PC-3 (cell line): ENCODE measurements at regions of chr7 and their contacts with region 1.

Region 1: DNA sequence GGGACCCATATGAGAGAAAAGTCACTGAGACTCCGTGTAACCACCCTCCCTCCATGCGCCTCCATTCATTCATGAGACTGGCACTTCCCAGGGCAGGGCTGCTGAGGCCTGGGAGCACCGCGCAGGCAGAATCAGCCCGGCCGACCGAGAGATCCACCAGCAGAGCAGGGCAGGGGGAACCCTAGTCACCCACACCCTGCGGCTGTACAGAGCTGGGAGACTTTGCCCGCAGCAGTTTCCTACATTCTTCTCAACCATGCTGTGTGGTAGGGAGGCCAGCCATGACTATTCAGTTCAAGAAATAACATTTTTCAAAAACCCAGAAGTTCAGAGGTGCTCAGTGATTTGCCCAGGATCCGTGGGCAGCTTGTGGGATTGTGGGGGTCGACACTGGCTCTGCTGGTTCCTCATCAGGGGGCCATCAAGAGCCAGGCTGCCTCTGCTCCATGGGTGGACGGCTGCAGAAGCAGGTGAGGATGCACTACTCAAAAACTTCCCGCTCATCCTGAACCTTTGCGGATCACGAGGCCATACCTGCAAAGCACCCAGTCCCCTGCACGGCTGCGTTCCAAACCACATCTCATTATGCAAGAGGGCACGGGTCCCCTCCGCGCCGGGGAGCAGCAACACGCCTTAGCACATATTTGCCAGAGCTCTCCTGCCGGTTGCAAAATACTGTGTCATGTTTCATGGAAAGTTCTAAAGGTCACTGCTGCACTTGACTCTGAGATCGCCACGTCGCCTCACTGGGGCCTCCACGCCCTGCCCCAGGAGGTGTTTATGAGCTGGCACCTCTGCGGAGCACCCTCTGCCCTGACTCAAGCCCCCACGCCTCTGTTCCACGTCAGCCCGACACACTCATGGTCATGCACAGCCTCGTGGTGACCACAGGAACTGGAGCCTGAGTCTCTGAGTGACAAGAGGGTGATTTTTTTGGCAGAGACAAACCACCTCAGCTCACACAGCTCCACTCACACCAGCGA is 132.0 kb downstream of the PRKAG2 start:
- DNase-seq: peak; percentile 88
- ATAC-seq: peak; percentile 83
- H3K4me3 ChIP-seq: no peak overlapping the region
- H3K27ac ChIP-seq: peak overlapping the region; percentile 65
- H3K4me1 ChIP-seq: peaks cover 30% of the 10 kb centered on the region
- H3K27me3 ChIP-seq: no peaks in the 10 kb centered on the region
- CTCF ChIP-seq: peak; percentile 61

Region 2: GRCh38 chr7:151727579-151728285 is 17.2 kb before region 1 on chr7:
- CTCF ChIA-PET with region 1: no interaction called
- POLR2A ChIA-PET with region 1: interaction called, 3 read pairs
- intact Hi-C with region 1: loop called (anchors 1 kb)
- DNase-seq: peak; percentile 98
- ATAC-seq: peak; percentile 96
- H3K4me3 ChIP-seq: peak overlapping the region; percentile 54
- H3K27ac ChIP-seq: no peak overlapping the region
- H3K4me1 ChIP-seq: peaks cover 16% of the 10 kb centered on the region
- H3K27me3 ChIP-seq: no peaks in the 10 kb centered on the region
- CTCF ChIP-seq: no peak